ENCODE measurements at regions of chr6 and their contacts with region 1.

Region 1: DNA sequence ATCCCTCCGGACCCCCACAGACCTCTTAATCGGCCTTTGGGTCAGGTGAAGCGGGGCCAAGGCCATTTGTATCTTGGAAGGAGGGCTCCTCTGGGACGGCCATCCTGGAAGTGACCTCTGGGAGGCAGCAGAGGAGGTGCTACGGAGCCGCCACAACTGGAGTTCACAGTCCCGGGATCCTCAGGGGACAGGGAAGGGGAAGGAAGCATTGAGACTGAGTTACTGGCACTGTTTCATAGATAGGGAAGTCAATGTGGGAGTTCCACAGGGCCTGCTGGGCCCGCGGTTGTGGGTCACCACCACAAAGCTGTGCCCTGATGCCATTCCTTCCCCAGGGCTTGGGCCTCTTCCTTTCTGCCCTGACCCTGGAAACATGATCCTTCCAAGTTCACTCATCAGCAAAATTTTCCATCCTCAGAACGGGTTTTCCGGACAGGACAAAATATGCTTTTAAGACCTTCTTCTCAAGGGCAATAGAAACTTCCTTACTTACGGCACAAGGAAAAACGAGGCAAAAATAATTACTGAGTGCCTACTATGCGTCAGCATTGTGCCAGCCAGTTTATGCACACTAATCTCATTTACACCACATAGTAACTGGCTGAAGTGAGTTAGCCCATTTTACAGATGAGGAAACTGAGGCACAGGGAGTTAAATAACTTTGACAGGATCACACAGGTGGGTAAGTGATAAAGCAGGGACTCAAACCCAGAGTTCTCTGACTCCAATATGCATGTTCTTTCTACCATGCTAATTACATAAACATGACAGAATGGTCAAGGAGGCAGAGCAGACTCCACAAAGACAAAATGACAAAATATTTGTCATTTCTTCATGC is 143.8 kb downstream of the UNC5CL start:
- ATAC-seq: peak; percentile 58 to 100 (median 83)
- H3K4me3 ChIP-seq: no peak overlapping the region
- H3K27ac ChIP-seq: no peak overlapping the region
- H3K4me1 ChIP-seq: no peaks in the 10 kb centered on the region

Region 2: GRCh38 chr6:41013466-41014153 is 118.4 kb after region 1 on chr6:
- in situ Hi-C with region 1: loop called in 1 of 9 experiments (anchors 10 kb)
- ATAC-seq: no peak
- H3K4me3 ChIP-seq: no peak overlapping the region
- H3K27ac ChIP-seq: no peak overlapping the region
- H3K4me1 ChIP-seq: no peaks in the 10 kb centered on the region

Region 3: GRCh38 chr6:41027799-41028628 is 132.8 kb after region 1 on chr6:
- in situ Hi-C with region 1: loop called in 1 of 9 experiments (anchors 10 kb)
- ATAC-seq: peak; percentile 92 to 97 (median 94)
- H3K4me3 ChIP-seq: peak overlapping the region; percentile 7 to 28 (median 21)
- H3K27ac ChIP-seq: no peak overlapping the region
- H3K4me1 ChIP-seq: peaks cover 0 to 2% of the 10 kb centered on the region in 2 donors

Region 4: DNA sequence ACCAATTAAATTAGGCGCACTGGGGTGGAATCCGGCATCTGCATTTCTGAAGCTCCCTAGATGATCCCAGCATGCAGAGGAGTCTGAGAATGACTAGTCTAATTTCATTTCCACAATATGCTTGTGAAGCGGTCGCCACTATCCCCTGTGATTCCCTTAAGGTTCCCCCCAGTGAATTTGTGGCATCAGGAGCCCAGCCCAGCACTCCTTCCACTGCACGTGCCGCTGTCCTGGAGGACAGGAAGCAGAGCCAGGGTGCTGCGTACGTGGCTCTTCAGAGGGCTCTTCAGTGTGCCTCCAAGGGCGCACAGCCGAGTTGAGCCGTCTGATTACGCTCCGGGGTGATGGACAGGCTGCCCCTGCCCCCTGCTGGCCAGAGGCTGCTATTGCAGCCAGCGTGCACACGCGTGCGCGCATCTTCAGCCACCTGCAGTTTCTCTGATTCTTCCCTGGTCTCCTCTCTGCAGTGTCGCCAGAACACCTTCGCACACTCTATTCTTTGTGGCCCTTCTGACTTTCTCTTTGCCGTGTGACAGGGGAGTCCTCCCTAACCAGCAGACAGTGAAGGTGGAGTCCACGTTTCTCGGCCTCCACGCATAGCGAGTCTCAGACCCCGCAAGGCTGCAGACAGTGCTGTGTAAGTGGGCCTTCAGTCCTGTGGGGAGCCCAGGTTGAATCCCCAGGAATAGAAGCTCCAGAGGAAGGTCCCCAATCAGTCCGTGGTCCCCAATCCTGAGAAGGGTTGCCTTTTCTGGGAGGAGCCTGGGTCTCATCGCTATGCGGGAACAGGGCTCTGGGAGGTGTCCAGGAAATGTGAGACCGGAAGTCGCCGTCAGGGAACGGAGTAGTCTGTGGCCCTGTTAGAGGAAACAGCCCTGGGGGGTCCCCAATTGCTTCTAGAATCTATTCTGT is 423.7 kb after region 1 on chr6:
- in situ Hi-C with region 1: no loop called
- ATAC-seq: peak; percentile 92 to 99 (median 96)
- H3K4me3 ChIP-seq: no peak overlapping the region
- H3K27ac ChIP-seq: no peak overlapping the region
- H3K4me1 ChIP-seq: no peaks in the 10 kb centered on the region